Natural killer cell (primary cell): ENCODE measurements at regions of chr3 and their contacts with region 1.

Region 1: DNA sequence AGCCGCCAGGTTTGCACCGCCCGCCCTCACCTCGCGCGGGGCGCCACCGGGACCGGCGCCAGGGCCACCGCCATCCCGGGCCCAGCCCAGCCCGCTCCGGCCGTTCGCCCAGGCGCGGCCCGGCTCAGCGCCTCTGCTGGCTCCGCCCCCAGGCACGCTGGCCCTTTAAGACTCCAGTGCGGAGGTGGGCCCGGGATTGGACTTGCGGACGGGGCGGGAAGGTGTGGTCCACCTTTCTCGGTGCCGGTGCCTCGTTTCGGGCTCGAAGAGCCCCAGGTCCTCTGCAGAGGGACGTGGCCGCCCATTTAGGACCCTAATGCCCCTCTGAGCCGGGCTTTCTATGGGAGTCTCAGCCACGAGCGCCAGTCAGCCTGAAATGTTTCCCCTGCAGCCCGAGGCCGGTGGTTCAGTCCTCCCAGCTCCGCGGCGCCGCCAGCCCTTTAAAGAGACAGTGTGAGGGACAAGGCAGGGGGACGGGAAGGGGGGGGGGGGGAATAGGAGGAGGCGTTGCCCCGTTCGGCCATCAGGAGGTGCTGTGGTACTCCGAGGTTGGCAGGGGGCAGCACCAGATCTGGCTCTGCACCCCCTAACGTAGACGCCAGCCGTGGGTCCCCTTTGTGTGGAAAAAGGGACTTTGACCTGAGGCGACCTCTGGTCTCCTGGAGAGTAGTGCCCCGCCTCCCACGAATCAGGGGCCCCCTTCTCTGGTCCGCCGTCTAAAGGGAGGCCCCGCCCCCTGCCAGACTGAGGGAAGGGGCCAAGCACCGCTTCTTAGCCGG is 1.0 kb downstream of the HYAL2 start:
- DNase-seq: peak; percentile 81 to 88
- ATAC-seq: peak; percentile 78 to 87 (median 83)
- H3K4me3 ChIP-seq: peak overlapping the region; percentile 66
- H3K4me3 Mint-ChIP-seq: peak overlapping the region; percentile 85
- H3K27ac ChIP-seq: peak overlapping the region; percentile 91
- H3K27ac Mint-ChIP-seq: peak overlapping the region; percentile 74 to 87
- H3K4me1 ChIP-seq: peaks cover 61% of the 10 kb centered on the region
- H3K4me1 Mint-ChIP-seq: peaks cover 17 to 47% of the 10 kb centered on the region in 2 donors
- H3K27me3 ChIP-seq: no peaks in the 10 kb centered on the region
- H3K27me3 Mint-ChIP-seq: no peaks in the 10 kb centered on the region
- CTCF ChIP-seq: peak; percentile 46

Region 2: GRCh38 chr3:50337191-50337841 is 15.8 kb after region 1 on chr3:
- intact Hi-C with region 1: loop called (anchors 2 kb)
- DNase-seq: peak; percentile 85 to 97
- ATAC-seq: peak; percentile 67 to 80 (median 70)
- H3K4me3 ChIP-seq: peak overlapping the region; percentile 80
- H3K4me3 Mint-ChIP-seq: peak overlapping the region; percentile 98
- H3K27ac ChIP-seq: peak overlapping the region; percentile 93
- H3K27ac Mint-ChIP-seq: peak overlapping the region; percentile 93 to 96
- H3K4me1 ChIP-seq: peaks cover 76% of the 10 kb centered on the region
- H3K4me1 Mint-ChIP-seq: peaks cover 57 to 86% of the 10 kb centered on the region in 2 donors
- H3K27me3 ChIP-seq: no peaks in the 10 kb centered on the region
- H3K27me3 Mint-ChIP-seq: no peaks in the 10 kb centered on the region
- CTCF ChIP-seq: no peak